A673 (cell line): ENCODE measurements at regions of chr17 and their contacts with region 1.

Region 1: GRCh38 chr17:80147035-80147836 is at the start of gene EIF4A3:
- DNase-seq: peak; percentile 99
- H3K4me3 ChIP-seq: peak within 1 kb of the TSS; percentile 94
- H3K27ac ChIP-seq: peak within 1 kb of the TSS; percentile 92
- H3K4me1 ChIP-seq: peaks cover 12% of the 10 kb centered on the region
- H3K27me3 ChIP-seq: no peaks in the 10 kb centered on the region
- CTCF ChIP-seq: no peak
- total RNA-seq, gene EIF4A3: 155 and 158 TPM in 2 replicates

Region 2: DNA sequence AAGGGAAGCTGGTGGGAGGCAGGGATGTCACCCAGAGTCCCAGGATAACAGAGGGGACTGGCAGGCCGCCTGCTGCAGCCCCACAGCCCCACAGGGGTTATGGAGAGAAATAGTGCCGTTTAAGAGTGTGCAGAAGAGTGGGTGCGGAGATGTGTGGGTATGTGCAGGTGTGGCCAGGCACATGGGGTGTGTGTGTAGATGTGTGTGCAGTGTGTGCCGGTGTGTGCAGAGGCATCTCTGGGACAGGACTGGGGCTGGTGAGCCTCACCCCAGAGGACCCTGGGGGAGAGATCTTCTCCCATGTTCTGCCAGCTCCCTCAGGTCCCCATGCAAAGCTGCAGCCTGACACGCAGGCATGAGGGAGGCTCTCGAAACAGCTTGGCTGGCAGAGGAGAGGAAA is 693.8 kb before region 1 on chr17:
- CTCF ChIA-PET with region 1: no interaction called
- POLR2A ChIA-PET with region 1: no interaction called
- intact Hi-C with region 1: no loop called
- DNase-seq: no peak
- H3K4me3 ChIP-seq: no peak overlapping the region
- H3K27ac ChIP-seq: no peak overlapping the region
- H3K4me1 ChIP-seq: no peaks in the 10 kb centered on the region
- H3K27me3 ChIP-seq: peaks cover 12% of the 10 kb centered on the region
- CTCF ChIP-seq: no peak

Region 3: GRCh38 chr17:80204626-80205468 is 57.6 kb after region 1 on chr17:
- CTCF ChIA-PET with region 1: no interaction called
- POLR2A ChIA-PET with region 1: interaction called, 15 read pairs
- intact Hi-C with region 1: no loop called
- DNase-seq: peak; percentile 34
- H3K4me3 ChIP-seq: no peak overlapping the region
- H3K27ac ChIP-seq: no peak overlapping the region
- H3K4me1 ChIP-seq: peaks cover 9% of the 10 kb centered on the region
- H3K27me3 ChIP-seq: no peaks in the 10 kb centered on the region
- CTCF ChIP-seq: no peak

Region 4: GRCh38 chr17:80316927-80317702 is 169.9 kb after region 1 on chr17:
- CTCF ChIA-PET with region 1: no interaction called
- POLR2A ChIA-PET with region 1: no interaction called
- intact Hi-C with region 1: no loop called
- DNase-seq: no peak
- H3K4me3 ChIP-seq: no peak overlapping the region
- H3K27ac ChIP-seq: no peak overlapping the region
- H3K4me1 ChIP-seq: no peaks in the 10 kb centered on the region
- H3K27me3 ChIP-seq: no peaks in the 10 kb centered on the region
- CTCF ChIP-seq: no peak

Region 5: DNA sequence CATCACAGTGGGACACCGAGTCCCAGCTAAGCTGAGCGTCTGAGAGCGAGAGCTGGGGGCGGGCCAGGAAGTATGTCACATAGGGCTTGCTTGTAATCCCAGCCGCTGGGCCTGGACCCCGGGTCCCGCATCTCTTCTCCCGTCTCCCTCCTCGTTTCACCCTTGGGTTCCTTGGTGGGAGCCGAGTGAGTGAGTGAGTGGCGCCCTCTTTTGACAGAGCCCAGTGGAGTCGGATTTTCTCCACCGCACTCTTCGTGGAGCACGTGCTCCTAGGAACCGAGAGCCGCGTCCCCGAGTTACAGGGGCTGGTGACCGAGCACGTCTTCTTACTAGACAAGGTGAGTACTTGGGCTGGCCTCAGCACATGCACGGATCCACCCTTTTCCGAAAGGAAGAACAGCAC is 217.0 kb after region 1 on chr17:
- CTCF ChIA-PET with region 1: no interaction called
- POLR2A ChIA-PET with region 1: no interaction called
- intact Hi-C with region 1: no loop called
- DNase-seq: peak; percentile 59
- H3K4me3 ChIP-seq: no peak overlapping the region
- H3K27ac ChIP-seq: no peak overlapping the region
- H3K4me1 ChIP-seq: no peaks in the 10 kb centered on the region
- H3K27me3 ChIP-seq: no peaks in the 10 kb centered on the region
- CTCF ChIP-seq: peak; percentile 64

Region 6: GRCh38 chr17:80498242-80498919 is 351.1 kb after region 1 on chr17:
- CTCF ChIA-PET with region 1: no interaction called
- POLR2A ChIA-PET with region 1: no interaction called
- intact Hi-C with region 1: no loop called
- DNase-seq: peak; percentile 64
- H3K4me3 ChIP-seq: no peak overlapping the region
- H3K27ac ChIP-seq: no peak overlapping the region
- H3K4me1 ChIP-seq: peaks cover 5% of the 10 kb centered on the region
- H3K27me3 ChIP-seq: no peaks in the 10 kb centered on the region
- CTCF ChIP-seq: no peak